Activated CD4-positive, alpha-beta T cell treated with anti-CD3 and anti-CD28 coated beads for 36 hours (primary cell): ENCODE measurements at regions of chr12 and their contacts with region 1.

Region 1: GRCh38 chr12:62435303-62436163 is 31.1 kb upstream of the MON2 start:
- DNase-seq: peak; percentile 68
- ATAC-seq: peak; percentile 85
- H3K4me3 Mint-ChIP-seq: peak overlapping the region; percentile 67
- H3K27ac Mint-ChIP-seq: no peak overlapping the region
- H3K4me1 Mint-ChIP-seq: peaks cover 13% of the 10 kb centered on the region
- H3K27me3 Mint-ChIP-seq: peaks cover 19% of the 10 kb centered on the region

Region 2: DNA sequence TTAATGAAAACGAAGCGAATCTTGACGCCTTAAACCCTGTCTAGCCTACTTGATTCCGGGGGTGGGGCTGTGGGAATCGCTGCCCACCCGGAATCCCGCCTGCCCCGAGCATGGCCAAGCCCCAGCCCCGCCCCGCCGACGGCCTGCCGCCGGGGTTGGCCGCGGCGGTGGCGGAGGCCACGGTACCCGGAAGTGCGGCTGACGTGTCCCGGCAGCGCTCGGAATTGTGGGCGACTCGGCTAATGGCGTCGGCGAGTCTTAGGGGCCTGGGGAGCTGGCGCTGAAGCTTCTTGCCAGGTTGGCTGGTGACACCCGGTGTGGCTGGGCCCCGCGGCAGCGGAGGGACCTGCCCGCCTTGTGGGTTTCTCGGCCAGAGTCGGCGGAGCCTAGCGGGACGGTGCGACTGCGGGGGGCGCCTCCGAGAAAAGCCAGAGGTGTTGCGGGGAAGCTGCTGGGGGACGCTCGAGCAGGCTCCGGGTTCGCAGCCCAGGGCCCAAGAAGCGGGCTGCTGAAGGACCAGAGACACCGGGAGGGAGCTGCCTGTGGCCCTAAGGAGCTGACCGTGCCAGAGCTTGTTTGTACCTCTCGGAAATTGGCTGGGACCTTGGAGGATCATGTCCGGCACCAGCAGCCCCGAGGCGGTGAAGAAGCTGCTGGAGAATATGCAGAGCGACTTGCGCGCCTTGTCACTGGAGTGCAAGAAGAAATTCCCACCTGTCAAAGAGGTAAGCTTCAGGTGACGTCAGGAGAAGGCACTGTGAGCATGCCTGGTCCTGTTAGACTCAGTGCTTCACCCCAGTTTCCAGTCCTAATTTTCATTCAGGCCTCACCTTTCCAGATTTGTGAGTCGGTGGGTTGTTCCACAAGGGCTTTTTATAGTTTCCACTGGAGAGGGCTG is 31.3 kb after region 1 on chr12 and contains the start of gene MON2:
- CTCF ChIA-PET with region 1: interaction called, 31 read pairs
- POLR2A ChIA-PET with region 1: no interaction called
- intact Hi-C with region 1: no loop called
- DNase-seq: peak; percentile 92
- ATAC-seq: peak; percentile 97
- H3K4me3 Mint-ChIP-seq: peak within 1 kb of the TSS; percentile 92
- H3K27ac Mint-ChIP-seq: peak within 1 kb of the TSS; percentile 93
- H3K4me1 Mint-ChIP-seq: peaks cover 20% of the 10 kb centered on the region
- H3K27me3 Mint-ChIP-seq: peaks cover 4% of the 10 kb centered on the region
- total RNA-seq, gene MON2: 26.9 to 31.3 TPM

Region 3: DNA sequence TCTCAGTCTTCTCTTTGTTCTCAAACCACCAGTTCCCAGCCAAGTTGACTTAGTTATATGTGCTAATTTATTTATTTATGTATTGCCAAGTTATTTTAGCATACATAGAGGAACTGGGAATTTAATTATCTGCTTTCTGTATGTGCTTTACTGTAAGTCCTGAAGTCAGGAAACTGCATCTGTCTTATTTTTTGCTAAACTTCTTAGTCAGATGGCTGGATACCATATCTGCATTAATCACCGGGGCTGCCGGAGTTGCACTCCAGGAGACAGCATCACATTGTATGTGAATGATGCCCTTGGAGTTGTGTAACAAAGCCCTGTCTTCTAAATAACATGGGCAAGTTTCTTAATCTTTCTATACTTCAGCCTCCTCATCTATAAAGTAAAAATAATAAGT is 127.3 kb after region 1 on chr12:
- CTCF ChIA-PET with region 1: interaction called, 5 read pairs
- POLR2A ChIA-PET with region 1: no interaction called
- intact Hi-C with region 1: loop called in 1 of 2 experiments (anchors 5 kb)
- DNase-seq: no peak
- ATAC-seq: no peak
- H3K4me3 Mint-ChIP-seq: no peak overlapping the region
- H3K27ac Mint-ChIP-seq: no peak overlapping the region
- H3K4me1 Mint-ChIP-seq: no peaks in the 10 kb centered on the region
- H3K27me3 Mint-ChIP-seq: no peaks in the 10 kb centered on the region

Region 4: GRCh38 chr12:62785941-62786559 is 350.5 kb after region 1 on chr12:
- CTCF ChIA-PET with region 1: interaction called, 22 read pairs
- POLR2A ChIA-PET with region 1: no interaction called
- intact Hi-C with region 1: no loop called
- DNase-seq: peak; percentile 38
- ATAC-seq: peak; percentile 95
- H3K4me3 Mint-ChIP-seq: no peak overlapping the region
- H3K27ac Mint-ChIP-seq: peak overlapping the region; percentile 47
- H3K4me1 Mint-ChIP-seq: peaks cover 16% of the 10 kb centered on the region
- H3K27me3 Mint-ChIP-seq: peaks cover 2% of the 10 kb centered on the region

Region 5: DNA sequence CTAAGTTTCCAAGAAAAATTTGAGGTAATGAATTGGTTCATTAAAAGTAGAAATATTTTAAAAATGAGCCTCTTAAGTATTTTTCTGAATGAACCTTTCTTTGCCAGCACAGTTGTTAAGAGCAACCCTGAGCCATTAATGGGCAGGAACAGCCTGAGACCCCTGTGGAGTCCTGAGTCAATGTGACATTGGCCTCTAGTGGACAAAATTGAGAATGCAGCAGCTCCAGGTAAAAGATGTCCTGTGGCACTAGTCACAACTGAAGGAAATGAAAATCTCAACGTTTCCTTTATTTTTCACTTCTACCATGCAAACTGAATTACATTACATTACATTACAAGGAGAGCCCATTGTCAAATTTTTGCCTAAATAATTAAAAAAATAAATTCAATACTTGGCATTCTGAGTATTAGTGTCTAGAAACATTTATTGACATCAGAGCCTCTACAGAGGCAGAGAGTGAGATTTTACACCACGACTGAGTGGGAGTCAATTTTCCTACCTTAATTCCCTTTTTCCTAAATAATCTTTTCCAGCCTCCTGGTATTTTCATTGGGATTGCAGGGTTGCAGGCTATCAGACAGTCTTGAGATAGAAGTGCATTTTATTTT is 363.7 kb after region 1 on chr12:
- CTCF ChIA-PET with region 1: interaction called, 106 read pairs
- POLR2A ChIA-PET with region 1: interaction called, 3 read pairs
- intact Hi-C with region 1: loop called (anchors 1 kb)
- DNase-seq: peak; percentile 69
- ATAC-seq: peak; percentile 80
- H3K4me3 Mint-ChIP-seq: no peak overlapping the region
- H3K27ac Mint-ChIP-seq: no peak overlapping the region
- H3K4me1 Mint-ChIP-seq: no peaks in the 10 kb centered on the region
- H3K27me3 Mint-ChIP-seq: no peaks in the 10 kb centered on the region

Region 6: DNA sequence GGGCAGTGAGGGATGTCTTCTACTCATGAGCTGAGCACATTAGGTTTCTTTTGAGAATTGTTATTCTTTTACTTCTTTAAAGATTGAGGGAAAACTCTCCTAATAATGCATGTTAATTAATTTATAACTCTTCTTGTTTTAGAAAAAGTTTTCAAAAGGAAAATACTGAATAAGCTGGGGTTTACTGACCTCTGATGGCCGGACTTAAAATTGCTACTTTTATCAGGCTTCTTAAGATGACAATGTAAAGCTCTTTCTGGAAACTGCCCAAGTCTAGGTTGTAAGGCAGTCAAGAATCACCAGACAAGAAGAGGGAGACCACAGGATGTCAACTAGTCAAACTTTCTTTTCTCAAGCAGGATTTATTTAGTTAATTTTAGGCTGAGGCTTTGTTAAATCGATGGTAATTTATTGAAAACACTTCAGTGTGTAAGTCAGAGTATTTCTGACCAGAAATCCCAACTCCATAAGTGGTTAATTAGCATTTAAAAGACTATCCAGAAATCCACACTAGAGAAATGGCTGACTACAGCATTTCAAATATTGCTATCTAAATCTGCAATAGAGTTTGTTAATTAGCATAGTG is 633.4 kb after region 1 on chr12:
- CTCF ChIA-PET with region 1: no interaction called
- POLR2A ChIA-PET with region 1: no interaction called
- intact Hi-C with region 1: loop called in 1 of 2 experiments (anchors 2 kb)
- DNase-seq: no peak
- ATAC-seq: no peak
- H3K4me3 Mint-ChIP-seq: no peak overlapping the region
- H3K27ac Mint-ChIP-seq: no peak overlapping the region
- H3K4me1 Mint-ChIP-seq: no peaks in the 10 kb centered on the region
- H3K27me3 Mint-ChIP-seq: no peaks in the 10 kb centered on the region